Right cardiac atrium (tissue), 5 donors: ENCODE measurements at regions of chr10 and their contacts with region 1.

Region 1: DNA sequence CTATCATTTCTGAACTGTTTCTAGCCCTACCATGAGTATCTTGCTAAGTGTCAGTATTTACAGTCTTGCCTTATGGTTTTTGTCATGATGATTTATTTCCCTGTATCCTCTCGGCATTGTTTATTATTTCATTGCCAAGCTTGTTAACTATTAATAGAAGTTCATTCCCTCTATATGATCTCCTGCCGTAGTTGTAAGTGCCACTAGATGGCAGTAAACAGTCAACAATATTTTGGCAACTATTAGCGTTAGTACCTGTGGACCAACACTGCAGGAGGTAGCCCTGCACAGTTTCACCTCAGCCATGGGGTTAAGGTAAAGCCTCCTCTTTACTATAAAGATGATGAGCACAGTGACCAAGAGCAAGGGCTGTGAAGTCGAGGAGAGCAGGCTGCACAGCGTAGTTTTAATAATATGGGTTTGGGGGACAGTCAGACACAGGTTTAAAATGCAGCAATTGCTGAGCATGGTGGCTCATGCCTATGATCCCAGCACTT is 26.1 kb upstream of the CCNJ start:
- DNase-seq: no peak
- ATAC-seq: peak; percentile 55 to 81
- H3K4me3 ChIP-seq: no peak overlapping the region
- H3K27ac ChIP-seq: no peak overlapping the region
- H3K4me1 ChIP-seq: no peaks in the 10 kb centered on the region
- H3K27me3 ChIP-seq: no peaks in the 10 kb centered on the region

Region 2: GRCh38 chr10:95841661-95842498 is 175.4 kb before region 1 on chr10:
- intact Hi-C with region 1: no loop called
- DNase-seq: no peak
- ATAC-seq: peak; percentile 72 to 89
- H3K4me3 ChIP-seq: no peak overlapping the region
- H3K27ac ChIP-seq: peak overlapping the region; percentile 23
- H3K4me1 ChIP-seq: no peaks in the 10 kb centered on the region
- H3K27me3 ChIP-seq: no peaks in the 10 kb centered on the region

Region 3: DNA sequence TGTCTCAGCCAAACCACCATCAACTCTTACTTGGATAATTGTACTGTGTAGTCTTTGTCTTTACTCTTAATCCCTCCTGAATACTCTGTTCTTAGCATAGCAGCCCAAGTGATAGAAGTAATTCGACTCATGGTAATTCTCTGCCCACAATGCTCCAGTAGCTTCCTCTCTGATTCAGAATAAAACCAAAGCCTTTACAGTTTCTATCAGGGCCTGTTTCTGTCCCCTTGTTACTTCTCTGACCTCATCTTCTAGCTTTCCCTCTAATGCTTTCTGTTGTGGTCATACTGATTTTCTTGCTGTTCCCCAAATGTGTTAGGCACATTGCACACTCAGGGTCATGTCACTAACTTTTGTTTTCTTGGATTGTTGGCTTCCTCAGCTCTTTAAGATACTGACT is 120.9 kb after region 1 on chr10:
- intact Hi-C with region 1: loop called in 1 of 4 experiments (anchors 10 kb)
- DNase-seq: no peak
- ATAC-seq: no peak
- H3K4me3 ChIP-seq: no peak overlapping the region
- H3K27ac ChIP-seq: no peak overlapping the region
- H3K4me1 ChIP-seq: no peaks in the 10 kb centered on the region
- H3K27me3 ChIP-seq: no peaks in the 10 kb centered on the region

Region 4: GRCh38 chr10:96292971-96293920 is 276.0 kb after region 1 on chr10:
- intact Hi-C with region 1: loop called in 3 of 4 experiments (anchors 10 kb)
- DNase-seq: no peak
- ATAC-seq: peak; percentile 64 to 79
- H3K4me3 ChIP-seq: no peak overlapping the region
- H3K27ac ChIP-seq: no peak overlapping the region
- H3K4me1 ChIP-seq: no peaks in the 10 kb centered on the region
- H3K27me3 ChIP-seq: no peaks in the 10 kb centered on the region